Ovary (tissue), 10 donors: ENCODE measurements at regions of chr13 and their contacts with region 1.

Region 1: DNA sequence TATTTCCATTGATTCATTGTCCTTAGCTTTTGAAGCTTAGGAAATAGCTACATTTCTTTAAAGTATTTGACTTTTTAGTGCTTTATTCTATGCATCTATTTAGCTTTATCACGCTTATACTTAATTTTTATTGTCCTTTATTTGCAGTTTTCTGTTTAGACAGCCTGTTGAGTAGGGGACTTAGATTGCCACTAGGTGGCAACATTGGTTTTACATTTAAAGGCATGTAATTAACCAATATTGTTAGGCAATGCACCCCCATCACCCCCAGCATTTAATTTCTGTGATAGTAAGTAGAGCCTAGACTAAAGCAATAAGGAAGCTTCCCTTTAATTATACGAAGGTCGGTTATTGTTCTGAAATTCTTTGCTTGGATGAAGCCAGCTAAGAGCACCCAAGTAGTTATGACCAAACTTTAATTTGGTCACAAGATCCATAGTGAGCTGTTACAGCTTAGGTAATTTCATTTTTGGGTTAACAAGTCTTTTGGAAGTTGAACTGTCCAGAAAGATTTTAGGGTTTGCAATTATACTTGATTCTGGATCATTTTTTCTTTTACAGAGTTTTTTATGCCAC is 36.5 kb downstream of the B3GLCT start:
- DNase-seq: no peak
- H3K4me3 ChIP-seq: no peak overlapping the region
- H3K27ac ChIP-seq: no peak overlapping the region
- H3K4me1 ChIP-seq: no peaks in the 10 kb centered on the region
- H3K27me3 ChIP-seq: no peaks in the 10 kb centered on the region
- CTCF ChIP-seq: peak in 2 of 3 donors; percentile 47 to 61
- EP300 ChIP-seq: no peak
- POLR2A ChIP-seq: no peak

Region 2: GRCh38 chr13:31310786-31311185 is 74.5 kb after region 1 on chr13:
- intact Hi-C with region 1: no loop called
- DNase-seq: no peak
- H3K4me3 ChIP-seq: no peak overlapping the region
- H3K27ac ChIP-seq: no peak overlapping the region
- H3K4me1 ChIP-seq: no peaks in the 10 kb centered on the region
- H3K27me3 ChIP-seq: no peaks in the 10 kb centered on the region
- CTCF ChIP-seq: no peak
- EP300 ChIP-seq: no peak
- POLR2A ChIP-seq: no peak

Region 3: GRCh38 chr13:31409678-31410356 is 173.5 kb after region 1 on chr13:
- intact Hi-C with region 1: loop called in 1 of 4 experiments (anchors 10 kb)
- DNase-seq: no peak
- H3K4me3 ChIP-seq: no peak overlapping the region
- H3K27ac ChIP-seq: no peak overlapping the region
- H3K4me1 ChIP-seq: no peaks in the 10 kb centered on the region
- H3K27me3 ChIP-seq: no peaks in the 10 kb centered on the region
- CTCF ChIP-seq: no peak
- EP300 ChIP-seq: no peak
- POLR2A ChIP-seq: no peak

Region 4: GRCh38 chr13:31424117-31424729 is 187.9 kb after region 1 on chr13:
- intact Hi-C with region 1: loop called in 3 of 4 experiments (anchors 5 to 10 kb)
- DNase-seq: peak; percentile 36 to 74 (median 66)
- H3K4me3 ChIP-seq: no peak overlapping the region
- H3K27ac ChIP-seq: no peak overlapping the region
- H3K4me1 ChIP-seq: no peaks in the 10 kb centered on the region
- H3K27me3 ChIP-seq: no peaks in the 10 kb centered on the region
- CTCF ChIP-seq: peak in 2 of 3 donors; percentile 20 to 49
- EP300 ChIP-seq: no peak
- POLR2A ChIP-seq: no peak

Region 5: GRCh38 chr13:31742097-31742734 is 505.9 kb after region 1 on chr13:
- intact Hi-C with region 1: loop called in 1 of 4 experiments (anchors 5 kb)
- DNase-seq: peak; percentile 41 to 67 (median 63)
- H3K4me3 ChIP-seq: no peak overlapping the region
- H3K27ac ChIP-seq: no peak overlapping the region
- H3K4me1 ChIP-seq: no peaks in the 10 kb centered on the region
- H3K27me3 ChIP-seq: peaks cover 4% of the 10 kb centered on the region
- CTCF ChIP-seq: peak; percentile 43 to 79 (median 67)
- EP300 ChIP-seq: no peak
- POLR2A ChIP-seq: no peak